Left ventricle myocardium inferior (tissue), 1 donor: ENCODE measurements at regions of chr13 and their contacts with region 1.

Region 1: GRCh38 chr13:79775830-79776229 is 294.9 kb downstream of the NDFIP2 start:
- DNase-seq: no peak
- H3K4me3 ChIP-seq: no peak overlapping the region
- H3K27ac ChIP-seq: no peak overlapping the region
- H3K4me1 ChIP-seq: peaks cover 24% of the 10 kb centered on the region
- H3K27me3 ChIP-seq: no peaks in the 10 kb centered on the region
- CTCF ChIP-seq: peak; percentile 75

Region 2: GRCh38 chr13:80363890-80364503 is 588.2 kb after region 1 on chr13:
- intact Hi-C with region 1: loop called (anchors 10 kb)
- DNase-seq: no peak
- H3K4me3 ChIP-seq: peak overlapping the region; percentile 43
- H3K27ac ChIP-seq: peak overlapping the region; percentile 24
- H3K4me1 ChIP-seq: peaks cover 30% of the 10 kb centered on the region
- H3K27me3 ChIP-seq: no peaks in the 10 kb centered on the region
- CTCF ChIP-seq: peak; percentile 91